Colonic mucosa (tissue), 4 donors: ENCODE measurements at regions of chr11 and their contacts with region 1.

Region 1: DNA sequence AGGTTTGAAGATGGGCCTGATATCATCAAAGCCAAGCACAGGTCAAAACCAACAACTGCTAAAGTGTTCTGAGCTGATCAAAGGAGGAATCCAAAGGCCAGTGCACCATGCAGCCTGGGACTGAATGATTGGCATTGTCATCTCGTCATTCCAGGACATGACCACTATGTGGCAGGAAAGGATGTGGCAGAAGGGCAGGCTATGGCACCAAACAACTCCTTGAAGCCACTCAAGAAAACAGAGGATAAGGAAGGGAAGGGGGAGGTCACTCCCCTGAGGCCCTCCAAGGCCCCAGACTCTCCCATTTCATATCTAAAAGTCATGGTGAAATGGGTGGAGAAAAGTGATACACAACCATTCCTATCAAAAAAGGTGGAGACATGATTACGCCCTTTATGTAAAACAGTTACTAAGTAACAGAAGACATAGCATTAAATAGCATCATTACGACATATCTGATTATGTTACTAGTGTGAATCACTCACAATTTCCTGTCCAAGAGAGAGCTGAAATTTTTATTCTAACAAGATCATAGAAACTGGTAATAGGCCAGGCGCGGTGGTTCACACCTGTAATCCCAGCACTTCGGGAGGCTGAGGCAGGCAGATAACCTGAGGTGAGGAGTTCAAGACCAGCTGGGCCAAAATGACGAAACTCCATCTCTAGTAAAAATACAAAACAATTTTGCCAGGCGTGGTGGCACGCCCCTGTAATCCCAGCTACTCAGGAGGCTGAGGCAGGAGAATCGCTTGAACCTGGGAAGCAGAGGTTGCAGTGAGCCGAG is 49.3 kb downstream of the AHNAK start:
- DNase-seq: peak; percentile 65
- H3K4me3 ChIP-seq: no peak overlapping the region
- H3K27ac ChIP-seq: peak overlapping the region; percentile 28
- H3K4me1 ChIP-seq: peaks cover 3% of the 10 kb centered on the region
- H3K27me3 ChIP-seq: no peaks in the 10 kb centered on the region
- CTCF ChIP-seq: peak; percentile 34

Region 2: DNA sequence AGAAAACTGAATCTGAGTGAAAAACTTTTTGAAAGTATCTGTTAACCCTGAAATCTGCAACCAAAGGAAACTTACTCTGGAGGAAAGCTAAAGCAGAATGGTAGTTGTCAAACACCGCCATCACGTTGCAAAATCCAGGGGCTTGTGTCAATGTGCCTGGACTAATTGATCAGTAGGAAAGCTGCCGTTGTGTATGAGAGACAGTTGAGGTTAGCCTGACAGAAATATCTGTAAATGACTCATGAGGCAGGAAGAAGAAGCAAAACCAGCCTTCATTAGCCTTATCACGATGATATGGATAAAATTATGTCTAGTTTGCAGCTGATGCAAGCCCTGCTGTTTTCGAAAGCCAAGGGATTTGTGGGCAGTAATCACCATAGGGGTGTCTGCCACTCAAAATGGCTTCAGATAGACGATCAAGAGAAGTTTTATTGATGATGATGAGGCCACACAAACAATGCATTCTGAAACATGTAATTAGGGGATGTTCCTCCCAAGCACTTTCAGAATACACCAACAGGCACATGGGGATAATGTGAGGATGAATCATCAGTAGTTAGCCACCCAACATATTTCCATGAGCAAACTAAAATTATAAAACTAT is 69.6 kb before region 1 on chr11:
- intact Hi-C with region 1: loop called (anchors 10 kb)
- DNase-seq: no peak
- H3K4me3 ChIP-seq: no peak overlapping the region
- H3K27ac ChIP-seq: peak overlapping the region; percentile 36
- H3K4me1 ChIP-seq: no peaks in the 10 kb centered on the region
- H3K27me3 ChIP-seq: no peaks in the 10 kb centered on the region
- CTCF ChIP-seq: no peak

Region 3: GRCh38 chr11:62542750-62543567 is 45.6 kb after region 1 on chr11:
- intact Hi-C with region 1: loop called (anchors 5 kb)
- DNase-seq: peak; percentile 91
- H3K4me3 ChIP-seq: peak overlapping the region; percentile 67
- H3K27ac ChIP-seq: peak overlapping the region; percentile 96
- H3K4me1 ChIP-seq: peaks cover 69% of the 10 kb centered on the region
- H3K27me3 ChIP-seq: no peaks in the 10 kb centered on the region
- CTCF ChIP-seq: peak; percentile 100

Region 4: DNA sequence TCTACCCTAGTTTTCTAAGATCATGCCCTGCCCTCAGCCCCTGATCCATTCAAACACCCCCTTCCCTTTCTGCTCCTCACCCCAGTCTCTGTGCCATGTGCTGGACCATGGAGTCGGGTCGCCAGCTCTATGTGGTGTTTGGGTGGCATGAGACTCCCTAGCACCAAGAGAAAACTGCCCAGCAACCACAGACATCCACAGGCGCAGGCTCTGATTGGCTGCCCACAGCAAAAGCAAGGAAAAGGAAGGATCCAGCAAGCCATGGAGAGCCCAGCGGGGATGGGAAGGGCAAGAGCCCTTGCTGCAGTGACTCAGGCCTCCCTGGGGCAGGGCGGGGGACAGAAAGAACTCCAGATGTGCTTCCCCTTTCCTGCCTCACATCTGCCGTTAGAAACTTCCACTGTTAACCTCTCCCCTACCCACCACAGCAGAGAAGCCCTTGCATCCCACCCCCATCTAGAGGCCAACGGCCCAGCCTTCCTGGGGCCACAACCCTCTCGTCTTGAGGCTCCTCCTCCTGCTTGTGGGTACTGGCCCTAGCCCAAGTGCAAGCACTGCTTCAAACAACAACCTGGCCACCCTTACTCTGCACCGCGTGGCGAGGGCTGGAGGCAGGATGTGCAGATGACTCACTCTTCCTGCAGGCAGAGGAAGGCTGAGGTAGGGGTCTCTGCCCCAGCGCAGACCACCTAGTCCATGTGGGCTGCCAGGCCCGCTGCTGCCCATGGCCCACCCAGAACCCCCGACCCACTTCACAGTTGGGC is 59.0 kb after region 1 on chr11:
- intact Hi-C with region 1: loop called (anchors 5 kb)
- DNase-seq: peak; percentile 87
- H3K4me3 ChIP-seq: peak overlapping the region; percentile 7
- H3K27ac ChIP-seq: peak overlapping the region; percentile 92
- H3K4me1 ChIP-seq: peaks cover 51% of the 10 kb centered on the region
- H3K27me3 ChIP-seq: no peaks in the 10 kb centered on the region
- CTCF ChIP-seq: no peak

Region 5: GRCh38 chr11:62787005-62787759 is 289.9 kb after region 1 on chr11 and contains the start of gene TMEM179B:
- intact Hi-C with region 1: no loop called
- DNase-seq: peak; percentile 100
- H3K4me3 ChIP-seq: peak within 1 kb of the TSS; percentile 84
- H3K27ac ChIP-seq: peak within 1 kb of the TSS; percentile 99
- H3K4me1 ChIP-seq: peaks cover 10% of the 10 kb centered on the region
- H3K27me3 ChIP-seq: no peaks in the 10 kb centered on the region
- CTCF ChIP-seq: no peak
- total RNA-seq, gene TMEM179B: 46.7 to 54.5 TPM